ENCODE measurements at regions of chrX and their contacts with region 1.

Region 1: DNA sequence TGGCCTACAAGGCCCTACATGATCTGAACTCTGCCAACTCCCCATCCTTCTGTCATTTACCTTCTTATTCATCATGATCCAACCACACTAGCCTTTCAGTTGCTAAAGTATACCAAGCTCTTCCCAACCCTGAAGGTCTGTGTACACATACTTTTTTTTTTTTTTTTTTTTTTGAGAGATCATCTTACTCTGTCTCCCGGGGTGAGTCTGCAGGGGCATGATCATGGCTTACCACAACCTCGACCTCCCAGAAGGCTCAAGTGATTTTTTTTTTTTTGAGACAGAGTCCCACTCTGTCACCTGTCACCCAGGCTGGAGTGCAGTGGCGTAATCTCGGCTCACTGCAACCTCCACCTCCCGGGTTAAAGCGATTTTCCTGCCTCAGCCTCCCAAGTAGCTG is 5.9 kb upstream of the UTP14A start:
- DNase-seq: no peak

Region 2: DNA sequence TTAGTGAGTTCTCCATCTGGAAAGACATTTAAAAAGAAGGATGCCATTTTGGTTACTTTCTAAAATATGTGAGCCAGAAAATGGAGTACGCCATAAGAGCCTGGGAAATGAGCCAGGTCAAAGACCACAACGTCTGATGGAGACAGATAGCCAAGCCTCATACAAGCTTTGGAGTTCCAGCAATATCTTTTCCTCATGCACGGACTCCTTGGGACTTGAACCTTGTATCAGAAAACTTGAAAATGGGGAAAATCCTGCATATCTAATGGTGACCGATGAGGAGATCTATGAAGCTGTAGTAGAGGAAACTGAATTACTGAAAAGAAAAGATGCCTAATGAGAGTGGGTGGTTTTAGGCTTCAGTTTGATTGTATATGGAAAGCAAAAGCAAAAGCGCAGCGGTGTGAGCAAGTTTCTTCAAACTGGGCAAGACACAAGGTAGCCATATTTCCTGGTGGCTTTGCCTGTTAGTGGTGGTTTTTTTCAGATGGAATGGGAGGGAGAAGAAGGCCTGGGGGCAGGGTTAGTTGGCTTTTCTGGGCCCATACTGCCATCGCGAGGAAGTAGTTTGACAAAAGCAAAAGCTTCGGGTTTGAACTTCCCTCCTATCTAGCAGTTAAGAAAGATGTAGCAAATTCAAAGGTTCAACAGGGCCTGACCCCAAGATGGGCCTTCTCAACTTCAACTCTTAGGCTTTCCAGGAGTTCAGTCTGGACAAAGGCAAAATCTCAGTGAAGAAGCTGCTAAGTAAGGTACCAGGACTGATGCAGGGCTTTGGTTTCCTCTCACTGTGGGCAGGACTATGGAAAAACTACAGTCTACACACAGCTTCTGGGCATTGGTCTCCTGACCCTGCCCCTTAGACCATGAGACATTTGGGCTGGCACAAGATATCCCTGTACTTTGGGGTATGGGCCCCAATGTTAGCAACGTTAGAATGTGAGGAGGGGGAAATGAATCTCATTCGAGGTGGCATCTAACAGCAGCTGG is 1913.1 kb after region 1 on chrX:
- CTCF ChIA-PET with region 1: interaction called, 11 read pairs
- POLR2A ChIA-PET with region 1: no interaction called
- DNase-seq: peak; percentile 59

Measured in HEK293T (cell line).